OCI-LY7 (cell line): ENCODE measurements at regions of chr6 and their contacts with region 1.

Region 1: GRCh38 chr6:139262519-139263300 is 29.1 kb downstream of the TXLNB start:
- DNase-seq: peak; percentile 78
- H3K4me3 ChIP-seq: peak overlapping the region; percentile 50
- H3K27ac ChIP-seq: peak overlapping the region; percentile 88
- H3K4me1 ChIP-seq: peaks cover 63% of the 10 kb centered on the region
- CTCF ChIP-seq: no peak

Region 2: GRCh38 chr6:139124887-139125672 is 137.6 kb before region 1 on chr6:
- CTCF ChIA-PET with region 1: no interaction called
- POLR2A ChIA-PET with region 1: interaction called, 4 read pairs
- intact Hi-C with region 1: loop called (anchors 5 kb)
- DNase-seq: peak; percentile 92
- H3K4me3 ChIP-seq: peak overlapping the region; percentile 19
- H3K27ac ChIP-seq: peak overlapping the region; percentile 21
- H3K4me1 ChIP-seq: peaks cover 21% of the 10 kb centered on the region
- CTCF ChIP-seq: peak; percentile 98

Region 3: DNA sequence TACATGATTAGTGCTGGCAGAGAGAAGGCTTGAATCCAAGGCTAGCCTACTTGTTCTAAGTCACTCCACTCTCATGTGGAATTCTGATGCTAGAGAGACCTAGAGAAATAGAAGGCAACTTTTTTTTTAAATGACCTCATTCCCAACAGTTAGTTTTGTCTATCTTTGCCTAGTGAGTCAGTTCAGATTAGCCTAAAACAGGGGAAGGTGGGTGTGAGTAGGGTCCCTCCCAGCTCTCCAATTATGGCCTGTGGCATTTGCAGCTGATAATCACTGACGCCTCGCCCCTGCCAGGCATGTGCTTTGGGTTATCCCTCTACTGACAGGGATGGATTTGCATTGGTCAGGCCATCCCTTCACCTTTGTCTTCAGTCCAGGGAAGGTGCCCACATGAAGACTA is 15.5 kb after region 1 on chr6:
- CTCF ChIA-PET with region 1: no interaction called
- POLR2A ChIA-PET with region 1: interaction called, 110 read pairs
- intact Hi-C with region 1: no loop called
- DNase-seq: no peak
- H3K4me3 ChIP-seq: no peak overlapping the region
- H3K27ac ChIP-seq: peak overlapping the region; percentile 89
- H3K4me1 ChIP-seq: peaks cover 89% of the 10 kb centered on the region
- CTCF ChIP-seq: no peak

Region 4: DNA sequence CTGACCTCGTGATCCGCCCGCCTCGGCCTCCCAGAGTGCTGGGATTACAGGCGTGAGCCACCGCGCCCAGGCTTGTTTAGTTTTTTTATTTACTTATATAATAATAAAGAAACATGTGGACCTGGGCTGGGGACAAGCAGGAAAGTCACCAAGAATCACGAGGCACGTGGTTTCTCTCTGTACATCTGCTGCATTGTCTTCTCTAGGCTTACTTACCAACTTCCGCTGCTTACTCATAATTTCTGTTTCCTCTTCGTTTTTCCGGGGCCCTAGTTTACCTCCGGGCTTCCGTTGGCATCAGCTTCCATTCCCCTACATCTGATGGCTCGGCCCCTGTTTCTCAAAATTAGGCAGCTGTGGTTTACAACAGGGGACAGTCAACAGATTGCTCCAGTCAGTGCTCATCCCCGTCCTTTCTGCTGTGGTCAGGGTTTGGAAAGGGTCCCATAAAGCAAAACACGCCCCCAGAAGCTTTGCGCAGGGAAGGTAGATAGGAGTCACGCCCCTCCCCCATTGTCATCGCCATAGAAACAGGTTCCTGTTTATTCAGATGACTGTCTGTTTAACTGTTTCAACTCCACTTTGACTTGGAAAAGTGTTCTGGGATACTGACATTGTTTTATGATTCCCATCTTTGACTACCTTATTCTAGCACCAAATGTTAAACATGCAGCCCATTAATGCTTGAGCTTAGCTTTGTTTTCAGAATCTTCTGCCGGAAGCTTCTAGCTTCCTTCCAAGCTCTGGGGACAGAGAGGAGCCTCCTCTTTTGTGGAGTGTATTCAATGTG is 61.0 kb after region 1 on chr6:
- CTCF ChIA-PET with region 1: interaction called, 3 read pairs
- POLR2A ChIA-PET with region 1: interaction called, 132 read pairs
- intact Hi-C with region 1: no loop called
- DNase-seq: peak; percentile 90
- H3K4me3 ChIP-seq: peak overlapping the region; percentile 61
- H3K27ac ChIP-seq: peak overlapping the region; percentile 97
- H3K4me1 ChIP-seq: peaks cover 78% of the 10 kb centered on the region
- CTCF ChIP-seq: no peak

Region 5: DNA sequence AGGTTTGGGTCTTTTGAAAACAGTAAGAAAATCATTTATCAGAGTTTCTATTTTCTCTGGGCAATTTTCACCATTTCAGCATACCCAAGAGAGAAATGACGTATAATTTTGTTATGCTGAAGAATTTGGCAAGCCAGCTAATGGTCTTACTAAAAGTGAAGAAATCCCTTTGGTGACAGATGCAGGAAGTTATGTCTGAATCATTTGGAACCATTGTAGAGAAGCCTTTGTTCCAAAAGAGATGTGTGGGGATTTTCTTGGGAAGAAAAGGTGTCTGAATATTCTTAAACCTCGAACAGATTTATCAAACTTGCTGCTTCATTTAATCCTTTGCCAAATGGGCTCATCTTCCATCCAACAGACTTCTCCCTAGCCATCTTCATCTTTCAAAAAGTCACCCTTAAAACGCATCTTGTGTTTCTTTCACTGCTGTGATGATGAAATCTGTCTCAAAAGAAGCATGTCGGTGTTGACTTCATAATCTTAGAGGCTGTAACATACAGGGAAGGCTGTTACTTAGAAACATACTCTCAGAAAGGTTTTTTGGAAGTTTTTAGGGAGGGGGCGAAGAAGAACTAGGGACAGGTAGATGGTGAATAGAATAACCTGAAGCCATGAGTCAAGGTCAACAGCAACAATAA is 72.2 kb after region 1 on chr6:
- CTCF ChIA-PET with region 1: no interaction called
- POLR2A ChIA-PET with region 1: interaction called, 132 read pairs
- intact Hi-C with region 1: no loop called
- DNase-seq: no peak
- H3K4me3 ChIP-seq: peak overlapping the region; percentile 26
- H3K27ac ChIP-seq: no peak overlapping the region
- H3K4me1 ChIP-seq: peaks cover 43% of the 10 kb centered on the region
- CTCF ChIP-seq: no peak